ENCODE measurements at regions of chr6 and their contacts with region 1.

Region 1: GRCh38 chr6:13277836-13278563 is 50.3 kb downstream of the TBC1D7 start:
- DNase-seq: peak; percentile 74
- ATAC-seq: peak; percentile 22
- H3K4me3 ChIP-seq: peak overlapping the region in 1 of 5 experiments; percentile 34
- H3K4me3 Mint-ChIP-seq: peak overlapping the region; percentile 63
- H3K27ac ChIP-seq: peak overlapping the region; percentile 2 to 70
- H3K27ac Mint-ChIP-seq: peak overlapping the region; percentile 57
- H3K4me1 ChIP-seq: peaks cover 49 to 70% of the 10 kb centered on the region in 2 donors
- H3K4me1 Mint-ChIP-seq: peaks cover 71% of the 10 kb centered on the region
- H3K27me3 ChIP-seq: no peaks in the 10 kb centered on the region
- H3K27me3 Mint-ChIP-seq: no peaks in the 10 kb centered on the region
- CTCF ChIP-seq: peak; percentile 61

Region 2: DNA sequence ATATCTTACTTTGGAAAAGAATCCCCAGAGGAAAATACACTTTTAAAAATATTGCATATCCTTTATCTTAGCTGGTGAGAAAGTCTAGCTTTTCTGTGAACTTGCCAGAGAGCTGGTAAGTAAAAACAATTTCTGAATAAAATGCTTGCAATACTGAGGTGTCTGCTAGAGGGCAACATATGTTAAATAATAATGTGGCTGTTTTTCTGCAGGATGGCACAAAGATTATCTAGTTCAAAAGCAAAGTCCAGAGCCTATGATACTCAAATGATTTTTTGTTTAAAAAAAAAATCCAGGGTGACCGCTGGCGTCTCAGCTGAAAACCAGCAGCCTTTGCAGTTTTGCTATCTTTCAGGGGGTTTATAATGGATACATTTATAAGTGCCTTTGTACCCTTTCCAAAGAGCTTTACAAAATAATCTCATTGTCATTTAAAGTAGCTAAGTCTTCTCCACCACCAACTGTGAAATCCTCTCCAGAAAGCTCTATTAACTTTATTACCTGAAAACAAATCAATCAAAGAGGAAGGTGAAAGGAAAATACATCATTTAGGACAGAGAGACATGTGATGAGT is 366.5 kb before region 1 on chr6:
- CTCF ChIA-PET with region 1: interaction called, 9 read pairs
- POLR2A ChIA-PET with region 1: no interaction called
- intact Hi-C with region 1: loop called (anchors 5 kb)
- DNase-seq: peak; percentile 42
- ATAC-seq: no peak
- H3K4me3 ChIP-seq: no peak overlapping the region
- H3K4me3 Mint-ChIP-seq: no peak overlapping the region
- H3K27ac ChIP-seq: no peak overlapping the region
- H3K27ac Mint-ChIP-seq: no peak overlapping the region
- H3K4me1 ChIP-seq: peaks cover 0 to 5% of the 10 kb centered on the region in 2 donors
- H3K4me1 Mint-ChIP-seq: peaks cover 5% of the 10 kb centered on the region
- H3K27me3 ChIP-seq: no peaks in the 10 kb centered on the region
- H3K27me3 Mint-ChIP-seq: peaks cover 9% of the 10 kb centered on the region
- CTCF ChIP-seq: peak; percentile 60

Region 3: DNA sequence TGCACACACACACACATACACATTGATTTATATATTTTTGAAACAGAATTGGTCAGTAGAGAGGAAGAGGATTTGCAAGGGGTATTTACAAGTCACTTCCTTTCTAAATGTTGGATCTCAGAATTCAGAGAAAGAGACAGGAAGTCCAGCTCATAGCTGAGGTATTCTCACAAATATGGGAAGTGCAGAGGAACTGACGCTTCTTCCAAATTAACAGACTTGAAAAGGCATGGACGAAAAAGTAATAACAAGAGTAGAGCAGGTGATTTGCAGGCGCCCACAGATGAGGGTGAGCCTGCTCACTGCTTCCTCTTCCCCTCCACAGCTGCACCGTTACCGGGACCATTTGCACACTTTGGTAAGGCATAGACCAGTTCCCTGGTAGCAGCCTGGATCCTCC is 315.0 kb before region 1 on chr6:
- CTCF ChIA-PET with region 1: no interaction called
- POLR2A ChIA-PET with region 1: no interaction called
- intact Hi-C with region 1: no loop called
- DNase-seq: no peak
- ATAC-seq: no peak
- H3K4me3 ChIP-seq: no peak overlapping the region
- H3K4me3 Mint-ChIP-seq: no peak overlapping the region
- H3K27ac ChIP-seq: no peak overlapping the region
- H3K27ac Mint-ChIP-seq: no peak overlapping the region
- H3K4me1 ChIP-seq: peaks cover 11 to 13% of the 10 kb centered on the region in 2 donors
- H3K4me1 Mint-ChIP-seq: peaks cover 15% of the 10 kb centered on the region
- H3K27me3 ChIP-seq: peaks cover 0 to 8% (median 4%) of the 10 kb centered on the region in 4 experiments
- H3K27me3 Mint-ChIP-seq: peaks cover 34% of the 10 kb centered on the region
- CTCF ChIP-seq: no peak

Region 4: GRCh38 chr6:13194852-13195251 is 83.1 kb before region 1 on chr6:
- CTCF ChIA-PET with region 1: interaction called, 152 read pairs
- POLR2A ChIA-PET with region 1: interaction called, 8 read pairs
- intact Hi-C with region 1: loop called (anchors 1 kb)
- DNase-seq: peak; percentile 80
- ATAC-seq: peak; percentile 70
- H3K4me3 ChIP-seq: no peak overlapping the region
- H3K4me3 Mint-ChIP-seq: no peak overlapping the region
- H3K27ac ChIP-seq: no peak overlapping the region
- H3K27ac Mint-ChIP-seq: peak overlapping the region; percentile 70
- H3K4me1 ChIP-seq: peaks cover 7 to 14% of the 10 kb centered on the region in 2 donors
- H3K4me1 Mint-ChIP-seq: peaks cover 13% of the 10 kb centered on the region
- H3K27me3 ChIP-seq: no peaks in the 10 kb centered on the region
- H3K27me3 Mint-ChIP-seq: peaks cover 13% of the 10 kb centered on the region
- CTCF ChIP-seq: peak; percentile 73

Region 5: GRCh38 chr6:13229205-13230085 is 48.6 kb before region 1 on chr6:
- CTCF ChIA-PET with region 1: interaction called, 10 read pairs
- POLR2A ChIA-PET with region 1: interaction called, 4 read pairs
- intact Hi-C with region 1: loop called (anchors 2 kb)
- DNase-seq: peak; percentile 69
- ATAC-seq: peak; percentile 77
- H3K4me3 ChIP-seq: no peak overlapping the region
- H3K4me3 Mint-ChIP-seq: peak overlapping the region; percentile 62
- H3K27ac ChIP-seq: no peak overlapping the region
- H3K27ac Mint-ChIP-seq: no peak overlapping the region
- H3K4me1 ChIP-seq: peaks cover 20 to 23% of the 10 kb centered on the region in 2 donors
- H3K4me1 Mint-ChIP-seq: peaks cover 31% of the 10 kb centered on the region
- H3K27me3 ChIP-seq: peaks cover 0 to 30% (median 9%) of the 10 kb centered on the region in 4 experiments
- H3K27me3 Mint-ChIP-seq: peaks cover 16% of the 10 kb centered on the region
- CTCF ChIP-seq: no peak

Region 6: GRCh38 chr6:13261464-13261994 is 16.5 kb before region 1 on chr6:
- CTCF ChIA-PET with region 1: interaction called, 15 read pairs
- POLR2A ChIA-PET with region 1: interaction called, 6 read pairs
- intact Hi-C with region 1: no loop called
- DNase-seq: peak; percentile 91
- ATAC-seq: peak; percentile 76
- H3K4me3 ChIP-seq: peak overlapping the region; percentile 25 to 55 (median 36)
- H3K4me3 Mint-ChIP-seq: peak overlapping the region; percentile 75
- H3K27ac ChIP-seq: peak overlapping the region; percentile 93
- H3K27ac Mint-ChIP-seq: peak overlapping the region; percentile 86
- H3K4me1 ChIP-seq: peaks cover 73 to 87% of the 10 kb centered on the region in 2 donors
- H3K4me1 Mint-ChIP-seq: peaks cover 89% of the 10 kb centered on the region
- H3K27me3 ChIP-seq: no peaks in the 10 kb centered on the region
- H3K27me3 Mint-ChIP-seq: no peaks in the 10 kb centered on the region
- CTCF ChIP-seq: no peak

Region 7: GRCh38 chr6:13296536-13296997 is 18.6 kb after region 1 on chr6:
- CTCF ChIA-PET with region 1: interaction called, 31 read pairs
- POLR2A ChIA-PET with region 1: interaction called, 5 read pairs
- intact Hi-C with region 1: no loop called
- DNase-seq: peak; percentile 44
- ATAC-seq: peak; percentile 19
- H3K4me3 ChIP-seq: no peak overlapping the region
- H3K4me3 Mint-ChIP-seq: peak overlapping the region; percentile 53
- H3K27ac ChIP-seq: no peak overlapping the region
- H3K27ac Mint-ChIP-seq: peak overlapping the region; percentile 68
- H3K4me1 ChIP-seq: peaks cover 15 to 26% of the 10 kb centered on the region in 2 donors
- H3K4me1 Mint-ChIP-seq: peaks cover 70% of the 10 kb centered on the region
- H3K27me3 ChIP-seq: no peaks in the 10 kb centered on the region
- H3K27me3 Mint-ChIP-seq: no peaks in the 10 kb centered on the region
- CTCF ChIP-seq: peak; percentile 40

Region 8: GRCh38 chr6:13302751-13303667 is 25.0 kb after region 1 on chr6:
- CTCF ChIA-PET with region 1: interaction called, 31 read pairs
- POLR2A ChIA-PET with region 1: interaction called, 5 read pairs
- intact Hi-C with region 1: no loop called
- DNase-seq: peak; percentile 69
- ATAC-seq: peak; percentile 40
- H3K4me3 ChIP-seq: peak overlapping the region in 3 of 5 experiments; percentile 8 to 33 (median 16)
- H3K4me3 Mint-ChIP-seq: peak overlapping the region; percentile 76
- H3K27ac ChIP-seq: peak overlapping the region; percentile 76 to 78
- H3K27ac Mint-ChIP-seq: peak overlapping the region; percentile 89
- H3K4me1 ChIP-seq: peaks cover 41 to 46% of the 10 kb centered on the region in 2 donors
- H3K4me1 Mint-ChIP-seq: peaks cover 76% of the 10 kb centered on the region
- H3K27me3 ChIP-seq: no peaks in the 10 kb centered on the region
- H3K27me3 Mint-ChIP-seq: no peaks in the 10 kb centered on the region
- CTCF ChIP-seq: no peak